Breast epithelium (tissue), 4 donors: ENCODE measurements at regions of chr21 and their contacts with region 1.

Region 1: GRCh38 chr21:41612674-41613532 is 104.9 kb upstream of the TMPRSS2 start:
- DNase-seq: peak; percentile 84 to 98
- H3K4me3 ChIP-seq: peak overlapping the region in 1 of 3 donors; percentile 31
- H3K27ac ChIP-seq: peak overlapping the region; percentile 93 to 95
- H3K4me1 ChIP-seq: peaks cover 23 to 26% of the 10 kb centered on the region in 2 donors
- H3K27me3 ChIP-seq: no peaks in the 10 kb centered on the region
- CTCF ChIP-seq: peak; percentile 80 to 96 (median 83)
- POLR2A ChIP-seq: no peak

Region 2: GRCh38 chr21:41559658-41560631 is 53.0 kb before region 1 on chr21:
- intact Hi-C with region 1: no loop called
- DNase-seq: no peak
- H3K4me3 ChIP-seq: no peak overlapping the region
- H3K27ac ChIP-seq: no peak overlapping the region
- H3K4me1 ChIP-seq: no peaks in the 10 kb centered on the region
- H3K27me3 ChIP-seq: no peaks in the 10 kb centered on the region
- CTCF ChIP-seq: no peak
- POLR2A ChIP-seq: no peak

Region 3: DNA sequence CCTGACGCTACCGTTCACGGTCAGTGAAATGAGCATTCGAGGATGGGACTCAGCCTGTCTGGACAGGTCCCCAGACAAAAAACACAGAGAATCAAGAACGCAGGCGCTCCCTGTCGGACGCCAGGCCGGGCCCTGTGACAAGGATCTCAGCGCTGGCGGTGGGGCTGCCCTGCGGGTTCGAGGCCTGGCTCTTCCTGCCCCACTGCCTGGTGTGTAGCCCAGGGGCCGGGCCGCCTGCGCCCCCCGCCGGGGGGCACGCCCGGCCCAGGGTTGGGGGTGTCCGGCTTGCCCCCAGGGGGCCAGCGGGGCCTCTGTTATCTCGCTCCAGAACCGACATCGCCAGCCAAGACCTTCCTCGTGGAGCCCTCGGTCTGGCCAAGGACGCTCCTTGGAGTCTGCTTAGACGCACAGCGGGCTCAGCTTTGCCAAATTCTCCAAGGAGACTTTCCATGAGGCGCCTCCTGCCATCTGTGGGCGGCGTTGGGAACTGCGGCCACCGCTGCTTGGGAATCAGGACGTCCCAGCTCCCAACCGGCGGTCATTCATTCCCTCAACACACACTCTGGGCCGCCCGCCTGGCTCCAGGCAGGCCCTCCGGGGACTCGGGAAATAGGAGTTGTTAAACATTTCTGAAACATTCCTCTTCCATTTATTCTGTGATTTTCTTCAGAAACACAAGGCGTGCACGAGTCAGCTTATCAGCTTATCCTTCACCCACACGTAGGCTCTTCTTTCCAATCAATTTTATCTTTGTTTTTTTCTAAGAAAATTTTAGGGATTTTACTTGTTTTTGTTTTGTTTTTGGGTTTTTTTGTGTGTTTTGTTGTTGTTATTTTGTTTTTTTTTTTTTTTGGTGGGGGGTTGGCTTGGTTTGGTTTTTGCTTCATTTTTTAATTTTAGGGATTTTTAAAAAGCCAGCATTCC is 165.3 kb after region 1 on chr21:
- intact Hi-C with region 1: loop called (anchors 5 kb)
- DNase-seq: peak; percentile 93
- H3K4me3 ChIP-seq: peak overlapping the region in 2 of 3 donors; percentile 21 to 36
- H3K27ac ChIP-seq: peak overlapping the region; percentile 83 to 84
- H3K4me1 ChIP-seq: no peaks in the 10 kb centered on the region
- H3K27me3 ChIP-seq: no peaks in the 10 kb centered on the region
- CTCF ChIP-seq: peak; percentile 95 to 97 (median 95)
- POLR2A ChIP-seq: no peak